Body of pancreas (tissue), 4 donors: ENCODE measurements at regions of chr2 and their contacts with region 1.

Region 1: DNA sequence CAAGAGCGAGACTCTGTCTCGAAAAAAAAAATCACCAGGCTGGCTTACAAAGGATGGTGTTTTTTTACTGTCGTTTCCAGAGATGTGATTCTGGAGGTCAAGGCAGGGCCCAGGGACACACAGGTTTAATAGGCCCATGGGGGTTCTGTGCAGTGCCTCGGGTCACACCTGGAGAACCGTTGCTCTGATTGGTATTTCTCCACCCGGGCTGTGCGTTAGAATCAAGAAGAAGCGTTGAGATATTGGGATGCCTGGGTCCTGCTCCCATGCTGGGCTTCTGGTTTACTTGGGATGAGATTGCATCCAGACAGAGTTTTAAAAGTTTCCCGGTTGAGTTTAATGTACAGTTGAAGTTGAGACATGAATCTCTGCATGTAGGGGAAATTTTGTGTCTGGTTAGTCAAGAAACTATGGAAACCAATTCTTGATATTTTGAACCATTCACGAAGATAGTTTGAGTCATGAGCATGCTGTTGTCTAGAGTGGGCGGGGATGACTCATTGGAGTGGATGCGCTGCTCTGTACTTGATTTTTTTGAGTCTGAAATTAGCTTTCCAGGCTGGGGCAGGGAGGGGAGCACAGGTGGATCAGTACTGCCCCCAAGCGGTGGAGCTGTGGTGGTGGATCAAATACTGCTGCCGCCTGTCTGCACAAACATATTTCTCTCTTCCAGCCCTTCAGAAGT is 50.1 kb downstream of the GREB1 start:
- DNase-seq: peak; percentile 72 to 80 (median 76)
- ATAC-seq: peak; percentile 72
- H3K4me3 ChIP-seq: no peak overlapping the region
- H3K27ac ChIP-seq: peak overlapping the region in 2 of 4 donors; percentile 21
- H3K4me1 ChIP-seq: peaks cover 14% of the 10 kb centered on the region
- H3K27me3 ChIP-seq: no peaks in the 10 kb centered on the region
- CTCF ChIP-seq: peak; percentile 80 to 95 (median 85)
- POLR2A ChIP-seq: no peak

Region 2: GRCh38 chr2:11473659-11474433 is 110.1 kb before region 1 on chr2:
- intact Hi-C with region 1: loop called (anchors 2 kb)
- DNase-seq: no peak
- ATAC-seq: no peak
- H3K4me3 ChIP-seq: no peak overlapping the region
- H3K27ac ChIP-seq: no peak overlapping the region
- H3K4me1 ChIP-seq: no peaks in the 10 kb centered on the region
- H3K27me3 ChIP-seq: no peaks in the 10 kb centered on the region
- CTCF ChIP-seq: no peak
- POLR2A ChIP-seq: no peak